ENCODE measurements at regions of chr2 and their contacts with region 1.

Region 1: GRCh38 chr2:44167940-44168680 is 565 bp upstream of the PPM1B start:
- DNase-seq: peak; percentile 99 to 100
- H3K4me3 ChIP-seq: peak overlapping the region; percentile 41
- H3K4me3 Mint-ChIP-seq: peak overlapping the region; percentile 97
- H3K27ac Mint-ChIP-seq: peak overlapping the region; percentile 98
- H3K4me1 ChIP-seq: peaks cover 6% of the 10 kb centered on the region; the same call in 1 of the 2 replicates
- H3K4me1 Mint-ChIP-seq: peaks cover 24% of the 10 kb centered on the region
- H3K27me3 ChIP-seq: no peaks in the 10 kb centered on the region
- H3K27me3 Mint-ChIP-seq: no peaks in the 10 kb centered on the region
- CTCF ChIP-seq: no peak

Region 2: DNA sequence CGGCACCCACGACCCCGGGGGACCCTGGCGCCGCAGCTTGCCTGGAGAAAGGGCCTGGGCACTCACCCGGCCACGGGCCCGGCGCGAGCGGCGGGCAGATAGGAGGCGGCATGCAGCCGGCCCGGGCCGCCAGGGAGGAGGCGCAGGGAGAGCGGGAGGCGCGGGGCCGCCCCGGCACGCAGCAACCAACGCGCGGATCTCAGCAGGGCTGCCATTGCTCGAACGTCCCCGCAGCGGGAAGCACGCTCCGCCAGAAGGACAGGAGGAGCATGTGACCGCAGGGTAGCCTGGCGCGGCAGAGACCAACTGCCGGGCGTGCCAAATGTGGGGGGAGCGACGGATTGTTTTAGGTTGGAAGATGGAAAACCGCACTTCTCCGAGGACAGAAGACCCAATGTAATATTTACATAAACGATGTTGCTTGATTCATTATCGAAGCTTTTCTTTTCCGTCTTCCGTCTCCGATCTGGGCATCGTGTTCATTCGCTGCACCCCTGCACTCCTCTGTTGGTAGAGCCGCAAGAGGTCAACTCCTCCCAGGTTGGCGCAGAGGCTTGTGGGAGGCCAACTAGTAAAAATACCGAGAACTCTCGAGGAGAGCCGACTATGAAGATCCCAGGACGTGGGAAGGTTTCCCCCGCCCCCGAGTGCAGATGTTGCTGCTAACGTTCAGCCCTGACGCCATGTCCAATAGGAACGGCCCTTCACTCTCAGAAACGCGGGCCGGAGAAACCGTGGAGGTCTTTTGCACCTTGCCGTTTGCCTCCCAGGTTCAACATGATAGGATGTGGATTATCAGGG is 172.2 kb before region 1 on chr2 and contains the start of gene LRPPRC:
- CTCF ChIA-PET with region 1: no interaction called
- POLR2A ChIA-PET with region 1: no interaction called
- intact Hi-C with region 1: loop called (anchors 5 kb)
- DNase-seq: peak; percentile 95 to 97
- H3K4me3 ChIP-seq: peak within 1 kb of the TSS; percentile 98
- H3K4me3 Mint-ChIP-seq: peak within 1 kb of the TSS; percentile 92
- H3K27ac Mint-ChIP-seq: peak within 1 kb of the TSS; percentile 100
- H3K4me1 ChIP-seq: peaks cover 15% of the 10 kb centered on the region
- H3K4me1 Mint-ChIP-seq: peaks cover 37% of the 10 kb centered on the region
- H3K27me3 ChIP-seq: no peaks in the 10 kb centered on the region
- H3K27me3 Mint-ChIP-seq: no peaks in the 10 kb centered on the region
- CTCF ChIP-seq: no peak
- total RNA-seq, gene LRPPRC: 242 and 244 TPM in 2 replicates

Region 3: GRCh38 chr2:44087036-44087713 is 80.9 kb before region 1 on chr2:
- CTCF ChIA-PET with region 1: interaction called, 7 read pairs
- POLR2A ChIA-PET with region 1: interaction called, 8 read pairs
- intact Hi-C with region 1: loop called (anchors 1 kb)
- DNase-seq: peak; percentile 83 to 93
- H3K4me3 ChIP-seq: peak overlapping the region; percentile 32
- H3K4me3 Mint-ChIP-seq: peak overlapping the region; percentile 73
- H3K27ac Mint-ChIP-seq: peak overlapping the region; percentile 80
- H3K4me1 ChIP-seq: peaks cover 30% of the 10 kb centered on the region
- H3K4me1 Mint-ChIP-seq: peaks cover 49% of the 10 kb centered on the region
- H3K27me3 ChIP-seq: no peaks in the 10 kb centered on the region
- H3K27me3 Mint-ChIP-seq: no peaks in the 10 kb centered on the region
- CTCF ChIP-seq: peak; percentile 94 to 96

Region 4: DNA sequence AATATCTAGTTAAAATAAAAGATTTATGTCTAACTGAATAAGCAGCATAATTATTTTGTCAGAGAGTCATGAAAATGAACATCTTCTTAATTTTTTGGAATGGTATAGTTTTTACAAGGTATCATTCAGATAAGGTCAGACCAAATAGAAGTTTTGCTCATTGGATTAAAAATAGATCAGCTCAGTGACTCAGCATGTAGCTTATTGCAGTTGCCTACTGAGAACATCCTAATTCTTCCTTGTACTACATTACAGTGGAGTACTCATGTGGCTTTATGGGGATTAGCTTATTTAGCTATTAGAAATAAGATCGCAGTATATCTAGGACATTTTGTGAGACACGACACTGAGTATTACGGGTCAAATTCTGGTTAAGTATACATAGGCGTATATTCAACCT is 37.7 kb before region 1 on chr2:
- CTCF ChIA-PET with region 1: interaction called, 4 read pairs
- POLR2A ChIA-PET with region 1: interaction called, 8 read pairs
- intact Hi-C with region 1: loop called (anchors 5 kb)
- DNase-seq: no peak
- H3K4me3 ChIP-seq: no peak overlapping the region
- H3K4me3 Mint-ChIP-seq: no peak overlapping the region
- H3K27ac Mint-ChIP-seq: no peak overlapping the region
- H3K4me1 ChIP-seq: peaks cover 33% of the 10 kb centered on the region
- H3K4me1 Mint-ChIP-seq: peaks cover 7% of the 10 kb centered on the region
- H3K27me3 ChIP-seq: no peaks in the 10 kb centered on the region
- H3K27me3 Mint-ChIP-seq: no peaks in the 10 kb centered on the region
- CTCF ChIP-seq: no peak

Region 5: GRCh38 chr2:44233450-44234128 is 65.5 kb after region 1 on chr2:
- CTCF ChIA-PET with region 1: no interaction called
- POLR2A ChIA-PET with region 1: no interaction called
- intact Hi-C with region 1: loop called (anchors 5 kb)
- DNase-seq: peak in 1 of 2 experiments; percentile 48
- H3K4me3 ChIP-seq: no peak overlapping the region
- H3K4me3 Mint-ChIP-seq: peak overlapping the region; percentile 16
- H3K27ac Mint-ChIP-seq: no peak overlapping the region
- H3K4me1 ChIP-seq: peaks cover 21% of the 10 kb centered on the region
- H3K4me1 Mint-ChIP-seq: peaks cover 4% of the 10 kb centered on the region
- H3K27me3 ChIP-seq: no peaks in the 10 kb centered on the region
- H3K27me3 Mint-ChIP-seq: no peaks in the 10 kb centered on the region
- CTCF ChIP-seq: no peak

Measured in Caco-2 (cell line).